ENCODE measurements at regions of chr19 and their contacts with region 1.

Region 1: GRCh38 chr19:4633140-4633967 is 6.0 kb upstream of the TNFAIP8L1 start:
- H3K4me3 ChIP-seq: no peak overlapping the region
- H3K27ac ChIP-seq: no peak overlapping the region
- H3K4me1 ChIP-seq: no peaks in the 10 kb centered on the region
- CTCF ChIP-seq: peak; percentile 90

Region 2: GRCh38 chr19:4524808-4525562 is 108.4 kb before region 1 on chr19:
- CTCF ChIA-PET with region 1: interaction called, 41 read pairs
- POLR2A ChIA-PET with region 1: no interaction called
- H3K4me3 ChIP-seq: no peak overlapping the region
- H3K27ac ChIP-seq: no peak overlapping the region
- H3K4me1 ChIP-seq: no peaks in the 10 kb centered on the region
- CTCF ChIP-seq: peak; percentile 74

Region 3: GRCh38 chr19:4557971-4558941 is 75.1 kb before region 1 on chr19:
- CTCF ChIA-PET with region 1: interaction called, 15 read pairs
- POLR2A ChIA-PET with region 1: no interaction called
- H3K4me3 ChIP-seq: no peak overlapping the region
- H3K27ac ChIP-seq: no peak overlapping the region
- H3K4me1 ChIP-seq: no peaks in the 10 kb centered on the region
- CTCF ChIP-seq: peak; percentile 68

Region 4: GRCh38 chr19:4567584-4568071 is 65.7 kb before region 1 on chr19:
- CTCF ChIA-PET with region 1: interaction called, 48 read pairs
- POLR2A ChIA-PET with region 1: no interaction called
- H3K4me3 ChIP-seq: no peak overlapping the region
- H3K27ac ChIP-seq: no peak overlapping the region
- H3K4me1 ChIP-seq: no peaks in the 10 kb centered on the region
- CTCF ChIP-seq: peak; percentile 92

Region 5: GRCh38 chr19:4576016-4576933 is 57.1 kb before region 1 on chr19:
- CTCF ChIA-PET with region 1: interaction called, 46 read pairs
- POLR2A ChIA-PET with region 1: interaction called, 4 read pairs
- H3K4me3 ChIP-seq: no peak overlapping the region
- H3K27ac ChIP-seq: no peak overlapping the region
- H3K4me1 ChIP-seq: peaks cover 4% of the 10 kb centered on the region
- CTCF ChIP-seq: peak; percentile 90

Region 6: GRCh38 chr19:4589579-4590410 is 43.6 kb before region 1 on chr19:
- CTCF ChIA-PET with region 1: interaction called, 19 read pairs
- POLR2A ChIA-PET with region 1: interaction called, 3 read pairs
- H3K4me3 ChIP-seq: no peak overlapping the region
- H3K27ac ChIP-seq: no peak overlapping the region
- H3K4me1 ChIP-seq: no peaks in the 10 kb centered on the region
- CTCF ChIP-seq: peak; percentile 42; the same call in 1 of the 2 replicates

Region 7: GRCh38 chr19:4618019-4618418 is 15.3 kb before region 1 on chr19:
- CTCF ChIA-PET with region 1: interaction called, 19 read pairs
- POLR2A ChIA-PET with region 1: no interaction called
- H3K4me3 ChIP-seq: no peak overlapping the region
- H3K27ac ChIP-seq: no peak overlapping the region
- H3K4me1 ChIP-seq: no peaks in the 10 kb centered on the region
- CTCF ChIP-seq: no peak